Right ventricle myocardium inferior (tissue), 1 donor: ENCODE measurements at regions of chr19 and their contacts with region 1.

Region 1: GRCh38 chr19:44770550-44771257 is 7.0 kb upstream of the CBLC start:
- DNase-seq: peak; percentile 96
- ATAC-seq: peak; percentile 99

Region 2: DNA sequence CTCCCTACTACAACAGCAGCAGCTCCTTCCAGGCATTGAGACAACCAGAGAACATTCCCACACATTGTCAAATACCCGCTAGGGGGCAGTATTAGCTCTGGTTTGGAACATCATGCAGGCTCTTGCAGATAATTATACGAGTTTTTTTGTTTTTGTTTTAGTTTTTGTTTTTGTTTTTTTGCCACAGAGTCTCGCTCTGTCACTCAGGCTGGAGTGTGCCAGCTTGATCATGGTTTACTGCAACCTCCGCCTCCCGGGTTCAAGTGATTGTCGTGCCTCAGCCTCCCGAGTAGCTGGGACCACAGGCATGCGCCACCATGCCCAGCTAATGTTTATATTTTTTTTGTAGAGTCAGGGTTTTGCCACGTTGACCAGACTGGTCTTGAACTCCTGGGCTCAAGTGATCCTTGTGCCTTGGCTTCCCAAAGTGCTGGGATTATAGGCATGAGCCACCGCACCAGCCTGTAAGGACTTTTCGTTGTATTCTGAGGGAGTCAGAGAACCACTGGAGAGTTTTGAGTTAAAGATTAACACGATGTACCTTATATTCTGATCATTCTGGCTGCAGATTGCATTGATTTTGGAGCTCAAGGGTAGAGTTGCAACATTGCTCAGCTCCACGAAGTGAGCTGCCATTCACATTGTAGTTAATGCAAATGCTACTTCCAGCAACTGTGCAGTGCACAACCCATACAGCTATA is 199.6 kb before region 1 on chr19:
- intact Hi-C with region 1: loop called (anchors 10 kb)
- DNase-seq: no peak
- ATAC-seq: peak; percentile 64

Region 3: DNA sequence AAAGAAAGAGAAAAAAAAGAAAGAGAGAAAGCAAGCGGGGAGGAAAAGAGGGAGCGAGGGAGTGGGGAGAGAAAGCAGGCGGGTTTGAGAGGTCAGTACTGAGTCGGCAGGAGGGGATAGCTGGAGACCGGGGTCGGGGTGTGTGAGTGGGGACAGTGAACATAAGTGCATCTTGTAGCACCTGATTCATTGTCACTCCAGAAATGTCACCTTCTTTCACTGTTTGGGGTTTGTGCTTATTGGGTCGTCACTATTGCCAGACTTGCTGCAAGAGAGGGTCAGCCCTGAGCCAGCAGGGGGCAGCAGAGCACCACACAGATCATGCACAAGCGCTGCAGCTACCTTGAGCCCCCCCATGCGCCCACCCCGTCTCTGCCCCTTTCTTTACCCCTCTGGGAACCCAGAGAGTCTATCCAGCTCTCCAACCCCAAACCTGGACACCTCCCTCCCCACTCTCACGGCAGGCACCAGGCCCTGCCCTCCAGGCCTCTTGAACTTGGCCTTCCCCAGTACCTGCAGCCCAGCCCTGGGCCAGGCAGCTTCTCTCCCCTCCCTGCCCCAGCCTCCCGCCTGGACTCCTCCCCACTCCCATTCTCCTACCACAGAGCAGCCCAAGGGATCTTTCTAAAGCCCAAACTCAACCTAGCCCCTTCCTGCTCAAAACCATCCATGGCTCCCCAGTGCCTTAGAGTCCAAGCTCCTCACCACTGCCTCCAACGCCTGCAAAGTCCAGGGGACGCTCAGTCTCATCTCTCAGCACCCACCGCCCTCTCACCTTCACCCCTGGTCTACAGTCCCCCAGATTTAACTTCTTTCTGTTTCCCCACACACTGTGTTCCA is 81.4 kb before region 1 on chr19:
- intact Hi-C with region 1: loop called (anchors 1 kb)
- DNase-seq: peak; percentile 85
- ATAC-seq: peak; percentile 65

Region 4: GRCh38 chr19:44723952-44724319 is 46.8 kb before region 1 on chr19:
- intact Hi-C with region 1: loop called (anchors 1 kb)
- DNase-seq: peak; percentile 91
- ATAC-seq: peak; percentile 90

Region 5: DNA sequence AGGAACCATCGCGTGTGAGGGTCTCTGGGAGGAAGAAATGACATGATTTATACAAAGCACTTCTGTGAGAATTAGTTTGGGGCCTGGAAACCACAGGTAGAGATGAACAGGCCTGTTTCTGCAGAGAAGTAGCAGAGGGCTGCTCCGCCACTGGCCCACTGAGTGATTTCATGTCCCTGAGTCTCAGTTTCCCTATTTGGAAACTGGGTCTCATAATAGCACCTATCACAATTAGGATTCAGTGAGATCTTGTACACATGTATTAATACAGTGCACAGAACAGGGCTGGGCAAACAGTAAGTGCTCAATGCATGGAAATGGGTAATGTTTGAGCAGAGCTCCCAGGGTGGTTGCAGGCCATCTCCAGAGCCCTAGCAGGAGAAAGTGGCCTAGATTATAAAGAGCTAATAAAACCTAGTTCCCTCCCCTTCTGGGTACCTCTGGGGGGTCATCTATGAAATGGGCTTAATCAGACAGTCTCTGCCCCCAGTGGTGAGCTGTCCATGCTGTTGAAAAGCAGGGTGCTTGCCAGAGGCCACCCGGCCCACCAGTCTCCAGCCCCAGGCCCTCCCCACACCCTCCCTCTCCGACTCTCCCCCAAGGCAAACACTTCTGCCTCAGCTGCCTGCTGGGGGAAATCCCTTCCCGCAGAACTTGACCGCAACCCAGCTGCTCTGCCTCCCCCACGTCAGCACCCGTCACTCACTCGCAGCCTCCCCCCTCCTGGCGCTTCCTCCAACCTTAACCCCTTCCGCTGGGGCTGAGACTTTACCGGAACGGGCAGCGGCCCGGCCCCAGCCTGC is 17.7 kb before region 1 on chr19:
- intact Hi-C with region 1: no loop called
- DNase-seq: peak; percentile 96
- ATAC-seq: peak; percentile 55